ENCODE measurements at regions of chr9 and their contacts with region 1.

Region 1: DNA sequence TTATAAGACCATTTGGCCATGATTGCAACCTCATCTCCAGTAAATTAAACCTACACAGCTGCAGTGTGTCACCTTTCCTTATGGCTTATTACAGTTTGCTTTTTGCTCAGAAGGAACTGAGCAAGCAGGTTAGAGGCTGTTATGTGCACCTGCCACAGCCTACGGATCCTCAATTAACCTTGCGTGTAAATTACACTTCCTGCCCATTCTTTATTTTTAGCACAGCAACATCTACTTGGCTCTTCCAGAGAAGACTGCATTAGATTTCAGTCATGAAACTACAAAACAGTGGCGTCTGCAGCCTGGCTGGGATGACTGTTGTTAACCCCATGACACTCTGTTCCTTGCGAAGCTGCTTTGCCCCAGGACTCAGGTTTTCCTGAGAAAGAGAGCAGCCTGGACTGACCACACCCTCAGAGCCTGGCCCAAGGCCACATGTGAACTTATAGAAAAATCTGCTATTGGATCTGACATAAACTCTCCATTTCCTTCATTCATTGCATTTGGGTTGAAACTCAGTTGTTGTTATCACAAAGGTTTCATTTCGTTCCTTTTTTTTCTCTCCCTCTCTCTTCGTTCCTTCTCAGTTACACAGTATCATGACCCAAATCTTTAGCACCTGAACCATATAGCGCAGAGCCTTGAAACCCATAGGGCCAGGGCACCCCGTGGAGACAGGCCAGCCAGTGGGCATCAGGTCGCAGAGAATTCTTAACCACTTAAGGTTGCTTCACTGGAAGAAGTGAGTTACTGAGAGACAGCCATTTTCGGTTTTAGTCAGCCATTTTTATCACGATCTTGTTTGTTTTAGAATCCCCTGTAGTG is 138.6 kb downstream of the PALM2AKAP2 start:
- DNase-seq: peak; percentile 64
- H3K4me3 Mint-ChIP-seq: peak overlapping the region; percentile 44
- H3K27ac Mint-ChIP-seq: peak overlapping the region; percentile 92
- H3K4me1 Mint-ChIP-seq: peaks cover 24% of the 10 kb centered on the region
- H3K27me3 Mint-ChIP-seq: no peaks in the 10 kb centered on the region

Region 2: DNA sequence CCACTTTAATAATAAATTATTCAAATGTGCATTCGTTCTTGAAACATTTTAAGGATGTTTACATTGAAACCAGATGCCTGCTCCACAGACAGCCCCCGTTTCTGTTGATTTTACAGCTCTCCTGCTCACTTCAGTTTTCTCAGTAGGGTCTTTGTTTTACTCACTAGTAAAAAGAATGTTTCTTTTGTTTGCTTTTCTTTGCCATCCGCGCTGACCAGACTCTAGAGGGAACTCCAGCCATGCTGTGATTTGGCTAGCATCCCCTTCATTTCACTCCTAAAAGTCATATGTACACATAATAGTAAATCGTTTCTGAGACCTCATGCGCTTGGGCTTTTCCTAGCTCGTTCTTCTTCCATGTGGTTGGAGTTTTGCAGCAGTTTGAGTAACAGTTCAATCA is 167.3 kb before region 1 on chr9:
- CTCF ChIA-PET with region 1: no interaction called
- intact Hi-C with region 1: no loop called
- DNase-seq: no peak
- H3K4me3 Mint-ChIP-seq: no peak overlapping the region
- H3K27ac Mint-ChIP-seq: no peak overlapping the region
- H3K4me1 Mint-ChIP-seq: no peaks in the 10 kb centered on the region
- H3K27me3 Mint-ChIP-seq: peaks cover 8% of the 10 kb centered on the region

Region 3: DNA sequence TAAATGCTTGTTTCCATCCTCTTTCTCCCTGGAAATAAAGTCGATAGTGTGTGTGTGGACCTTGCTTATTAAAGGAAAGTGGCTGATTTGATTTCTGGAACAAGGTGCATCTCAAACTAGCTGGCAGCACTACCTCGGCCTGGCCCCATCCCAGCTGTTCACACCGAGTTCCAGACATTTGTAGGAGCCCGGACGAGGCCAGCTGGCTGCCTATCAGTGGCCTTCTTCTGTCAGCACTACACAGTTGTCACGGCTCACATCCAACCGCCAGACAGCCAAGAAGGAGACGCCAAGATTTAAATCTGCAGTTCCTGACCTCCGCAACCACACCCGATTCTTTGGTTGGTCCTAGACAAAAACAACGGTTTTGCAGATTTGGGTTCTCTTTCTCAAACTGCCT is 74.9 kb before region 1 on chr9:
- CTCF ChIA-PET with region 1: no interaction called
- intact Hi-C with region 1: no loop called
- DNase-seq: no peak
- H3K4me3 Mint-ChIP-seq: no peak overlapping the region
- H3K27ac Mint-ChIP-seq: no peak overlapping the region
- H3K4me1 Mint-ChIP-seq: no peaks in the 10 kb centered on the region
- H3K27me3 Mint-ChIP-seq: peaks cover 4% of the 10 kb centered on the region

Region 4: GRCh38 chr9:109887079-109887478 is 31.5 kb before region 1 on chr9:
- CTCF ChIA-PET with region 1: no interaction called
- intact Hi-C with region 1: loop called (anchors 1 kb)
- DNase-seq: no peak
- H3K4me3 Mint-ChIP-seq: no peak overlapping the region
- H3K27ac Mint-ChIP-seq: peak overlapping the region; percentile 96
- H3K4me1 Mint-ChIP-seq: peaks cover 61% of the 10 kb centered on the region
- H3K27me3 Mint-ChIP-seq: no peaks in the 10 kb centered on the region

Region 5: GRCh38 chr9:109894921-109895758 is 23.4 kb before region 1 on chr9:
- CTCF ChIA-PET with region 1: no interaction called
- intact Hi-C with region 1: loop called (anchors 1 kb)
- DNase-seq: peak; percentile 89
- H3K4me3 Mint-ChIP-seq: peak overlapping the region; percentile 45
- H3K27ac Mint-ChIP-seq: peak overlapping the region; percentile 92
- H3K4me1 Mint-ChIP-seq: peaks cover 36% of the 10 kb centered on the region
- H3K27me3 Mint-ChIP-seq: no peaks in the 10 kb centered on the region

Region 6: GRCh38 chr9:109934857-109935215 is 16.3 kb after region 1 on chr9:
- CTCF ChIA-PET with region 1: interaction called, 4 read pairs
- intact Hi-C with region 1: loop called (anchors 1 kb)
- DNase-seq: peak; percentile 41
- H3K4me3 Mint-ChIP-seq: no peak overlapping the region
- H3K27ac Mint-ChIP-seq: peak overlapping the region; percentile 73
- H3K4me1 Mint-ChIP-seq: peaks cover 42% of the 10 kb centered on the region
- H3K27me3 Mint-ChIP-seq: no peaks in the 10 kb centered on the region

Region 7: DNA sequence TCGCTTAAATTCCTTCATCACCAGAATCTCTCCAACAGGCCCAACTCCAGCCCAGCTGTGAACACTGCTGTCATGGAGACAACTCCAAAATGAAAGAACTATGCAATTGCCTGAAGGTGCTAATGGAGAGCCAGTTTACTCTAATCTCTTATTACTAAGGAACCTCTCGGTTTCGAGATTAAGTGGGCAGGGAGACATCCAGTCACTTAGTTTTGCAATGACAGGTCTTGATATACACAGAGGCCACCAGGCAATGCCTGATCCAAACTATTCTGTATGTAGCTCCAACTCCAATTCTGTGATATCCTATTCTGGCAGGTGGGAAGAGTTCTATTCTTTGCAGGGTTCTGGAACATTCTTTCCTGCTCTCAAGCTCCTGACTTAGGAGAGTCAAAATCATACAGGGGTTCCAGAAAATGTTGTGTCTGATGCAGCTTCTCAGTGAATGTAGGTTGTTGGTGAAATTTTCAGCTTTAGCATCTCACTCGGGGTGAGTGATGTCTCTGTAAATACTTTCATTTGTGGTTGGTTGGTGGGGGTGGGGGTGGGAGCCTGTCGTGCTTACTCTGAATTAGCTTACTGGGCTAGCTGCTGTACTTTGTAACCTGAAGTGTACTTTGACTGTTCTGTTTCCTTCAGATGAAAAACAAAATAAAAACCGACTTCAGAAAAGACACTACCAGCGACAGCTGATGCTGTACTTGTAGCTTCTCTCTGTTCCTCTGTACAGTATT is 32.3 kb after region 1 on chr9:
- CTCF ChIA-PET with region 1: interaction called, 3 read pairs
- intact Hi-C with region 1: loop called (anchors 1 kb)
- DNase-seq: peak; percentile 58
- H3K4me3 Mint-ChIP-seq: no peak overlapping the region
- H3K27ac Mint-ChIP-seq: peak overlapping the region; percentile 67
- H3K4me1 Mint-ChIP-seq: peaks cover 23% of the 10 kb centered on the region
- H3K27me3 Mint-ChIP-seq: no peaks in the 10 kb centered on the region

Region 8: GRCh38 chr9:110081395-110081794 is 162.8 kb after region 1 on chr9:
- CTCF ChIA-PET with region 1: no interaction called
- intact Hi-C with region 1: no loop called
- DNase-seq: no peak
- H3K4me3 Mint-ChIP-seq: no peak overlapping the region
- H3K27ac Mint-ChIP-seq: no peak overlapping the region
- H3K4me1 Mint-ChIP-seq: peaks cover 12% of the 10 kb centered on the region
- H3K27me3 Mint-ChIP-seq: no peaks in the 10 kb centered on the region